ENCODE measurements at regions of chr15 and their contacts with region 1.

Region 1: GRCh38 chr15:38252481-38253412 is at the start of gene SPRED1:
- DNase-seq: peak; percentile 86
- ATAC-seq: peak; percentile 77
- total RNA-seq, gene SPRED1: 7.3 TPM

Region 2: GRCh38 chr15:38072348-38073177 is 180.2 kb before region 1 on chr15:
- intact Hi-C with region 1: loop called (anchors 10 kb)
- DNase-seq: peak; percentile 87
- ATAC-seq: peak; percentile 94

Region 3: GRCh38 chr15:38344351-38344750 is 91.6 kb after region 1 on chr15:
- intact Hi-C with region 1: loop called (anchors 5 kb)
- DNase-seq: no peak
- ATAC-seq: no peak

Region 4: DNA sequence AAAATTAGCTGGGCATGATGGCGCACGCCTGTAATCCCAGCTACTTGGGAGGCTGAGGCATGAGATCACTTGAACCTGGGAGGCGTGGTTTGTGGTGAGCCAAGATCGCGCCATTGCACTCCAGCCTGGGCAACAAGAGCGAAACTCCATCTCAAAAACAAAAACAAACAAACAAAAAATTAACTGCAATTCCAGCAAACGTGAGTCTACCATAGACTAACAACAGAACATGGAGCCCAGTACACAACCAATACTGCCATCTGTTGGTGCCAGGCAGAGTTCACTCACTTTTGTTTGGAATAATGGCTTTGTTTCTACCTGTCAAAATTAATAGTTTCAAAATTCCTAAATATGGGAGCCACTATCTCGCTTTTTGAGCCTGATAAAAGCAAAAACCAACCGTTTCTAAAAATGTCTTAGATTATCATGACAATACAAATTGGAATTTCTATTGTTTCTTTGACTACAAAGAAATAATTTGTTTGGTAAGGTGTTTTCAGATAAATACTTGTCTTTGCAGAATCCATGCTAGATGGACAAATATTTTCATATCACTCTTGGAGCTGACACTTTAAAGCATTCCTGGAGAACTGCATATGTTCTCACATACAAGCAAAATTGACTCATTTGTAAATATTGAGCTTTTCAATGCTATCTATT is 1622.3 kb after region 1 on chr15:
- intact Hi-C with region 1: no loop called
- DNase-seq: no peak
- ATAC-seq: no peak